ENCODE measurements at regions of chr12 and their contacts with region 1.

Region 1: DNA sequence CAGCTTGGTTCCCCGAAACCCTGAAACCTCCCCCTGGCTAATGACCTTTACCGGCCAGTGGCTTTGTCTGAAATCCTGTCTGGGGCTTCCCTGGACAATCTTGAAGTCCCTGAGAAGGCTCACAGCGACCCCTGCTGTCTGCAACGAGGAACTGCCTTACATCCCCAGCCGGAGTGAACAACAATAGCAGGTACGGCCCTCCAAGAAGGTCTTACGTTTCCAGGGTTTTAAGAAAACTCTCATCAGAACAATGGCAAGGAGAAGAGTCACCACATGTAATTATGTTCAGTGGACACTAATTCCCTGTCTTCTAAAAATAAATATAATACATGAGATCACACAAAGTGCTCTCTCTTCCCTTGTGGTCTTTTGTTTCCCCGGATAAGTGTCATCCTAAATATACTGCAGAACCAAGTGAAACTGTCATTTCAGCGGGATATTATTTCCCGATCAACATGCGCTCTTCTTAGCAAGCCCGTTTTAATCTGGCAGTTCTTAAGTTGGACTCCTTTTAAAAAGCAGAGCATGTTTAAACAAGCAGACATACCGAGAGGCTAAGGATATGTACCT is 53.3 kb downstream of the RBM19 start:
- DNase-seq: no peak
- H3K4me3 ChIP-seq: no peak overlapping the region
- H3K27ac ChIP-seq: no peak overlapping the region
- H3K4me1 ChIP-seq: no peaks in the 10 kb centered on the region
- H3K27me3 ChIP-seq: no peaks in the 10 kb centered on the region
- CTCF ChIP-seq: peak in 3 of 4 experiments; percentile 65 to 82 (median 79)
- EP300 ChIP-seq: no peak
- POLR2A ChIP-seq: no peak

Region 2: GRCh38 chr12:113310489-113310888 is 602.4 kb before region 1 on chr12:
- intact Hi-C with region 1: loop called (anchors 5 kb)
- DNase-seq: no peak
- H3K4me3 ChIP-seq: no peak overlapping the region
- H3K27ac ChIP-seq: no peak overlapping the region
- H3K4me1 ChIP-seq: no peaks in the 10 kb centered on the region
- H3K27me3 ChIP-seq: no peaks in the 10 kb centered on the region
- CTCF ChIP-seq: no peak
- EP300 ChIP-seq: no peak
- POLR2A ChIP-seq: no peak

Region 3: DNA sequence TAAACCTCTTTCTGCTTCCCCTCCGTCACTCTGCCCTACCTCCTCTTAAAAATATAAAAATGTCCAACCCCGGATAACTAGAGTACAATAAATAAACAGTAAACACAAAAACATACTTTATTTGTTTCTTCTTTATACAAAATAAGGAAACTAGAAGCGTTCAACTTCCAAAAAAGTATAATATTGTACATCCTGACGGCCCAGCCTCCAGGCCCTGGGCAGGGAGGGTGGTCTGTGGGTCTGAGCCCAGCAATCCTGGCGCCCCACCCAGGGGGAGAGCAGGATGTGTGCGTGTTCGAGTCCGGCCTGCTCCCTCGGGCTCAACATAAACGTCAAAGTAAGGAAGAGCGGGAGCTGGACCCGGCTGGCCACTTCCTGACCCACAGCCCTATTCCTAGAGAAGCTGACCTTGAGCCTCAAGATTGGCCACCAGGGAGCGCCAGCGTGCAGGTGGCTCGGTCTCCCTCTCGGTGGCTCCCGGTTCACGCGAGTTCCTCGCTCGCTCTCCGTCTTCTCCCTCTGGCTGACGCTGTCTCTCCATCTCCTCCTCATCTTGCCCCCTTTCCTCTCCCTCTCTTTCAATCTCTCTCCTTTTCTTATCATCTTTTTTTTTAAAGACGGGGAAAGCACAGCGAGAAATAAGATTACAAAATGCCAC is 450.6 kb before region 1 on chr12:
- intact Hi-C with region 1: loop called (anchors 2 kb)
- DNase-seq: peak; percentile 83
- H3K4me3 ChIP-seq: peak overlapping the region in 3 of 4 donors; percentile 16 to 36 (median 30)
- H3K27ac ChIP-seq: no peak overlapping the region
- H3K4me1 ChIP-seq: peaks cover 0 to 45% (median 40%) of the 10 kb centered on the region in 4 donors
- H3K27me3 ChIP-seq: peaks cover 45 to 96% (median 51%) of the 10 kb centered on the region in 3 donors
- CTCF ChIP-seq: peak in 3 of 4 experiments; percentile 49 to 79 (median 55)
- EP300 ChIP-seq: no peak
- POLR2A ChIP-seq: no peak